ENCODE measurements at regions of chr6 and their contacts with region 1.

Region 1: DNA sequence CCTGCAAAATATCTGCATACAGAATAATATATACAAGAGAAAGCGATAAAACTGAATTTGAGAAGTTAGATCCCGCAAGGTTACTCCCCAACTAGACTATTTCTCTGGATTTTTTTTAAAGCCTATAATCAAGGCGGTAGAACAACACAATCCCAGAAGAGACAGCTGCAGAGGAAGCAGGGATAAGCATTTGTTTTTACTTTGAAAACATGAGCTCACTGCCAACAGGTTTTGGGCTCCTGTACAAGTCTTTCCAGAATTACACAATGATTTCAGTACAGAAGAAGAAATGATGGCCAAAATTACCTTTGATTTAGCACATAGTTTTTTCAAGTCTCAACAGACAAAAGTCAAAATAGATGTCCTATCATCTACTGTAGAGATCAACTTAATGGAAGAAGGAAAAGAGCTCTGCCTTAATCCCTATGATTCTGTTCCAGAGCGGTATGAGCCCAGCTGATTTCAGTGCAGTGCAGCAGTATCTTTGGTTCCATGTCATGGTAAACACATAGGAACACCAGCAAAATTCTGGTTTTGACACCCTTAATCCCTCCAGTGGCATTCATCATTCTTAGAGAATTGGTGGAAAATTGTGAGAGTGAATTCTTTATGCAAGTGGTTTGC is 304.3 kb downstream of the HDGFL1 start:
- DNase-seq: peak; percentile 71
- ATAC-seq: no peak
- H3K4me3 ChIP-seq: no peak overlapping the region
- H3K27ac ChIP-seq: no peak overlapping the region
- H3K4me1 ChIP-seq: peaks cover 4% of the 10 kb centered on the region
- H3K27me3 ChIP-seq: no peaks in the 10 kb centered on the region
- CTCF ChIP-seq: no peak
- POLR2A ChIP-seq: no peak
- RAD21 ChIP-seq: no peak

Region 2: GRCh38 chr6:21648475-21649130 is 1225.0 kb before region 1 on chr6:
- CTCF ChIA-PET with region 1: no interaction called
- POLR2A ChIA-PET with region 1: no interaction called
- dilution Hi-C with region 1: no loop called
- in situ Hi-C with region 1: no loop called
- intact Hi-C with region 1: no loop called
- DNase-seq: no peak
- ATAC-seq: no peak
- H3K4me3 ChIP-seq: no peak overlapping the region
- H3K27ac ChIP-seq: no peak overlapping the region
- H3K4me1 ChIP-seq: no peaks in the 10 kb centered on the region
- H3K27me3 ChIP-seq: no peaks in the 10 kb centered on the region
- CTCF ChIP-seq: no peak
- POLR2A ChIP-seq: no peak
- RAD21 ChIP-seq: no peak

Region 3: DNA sequence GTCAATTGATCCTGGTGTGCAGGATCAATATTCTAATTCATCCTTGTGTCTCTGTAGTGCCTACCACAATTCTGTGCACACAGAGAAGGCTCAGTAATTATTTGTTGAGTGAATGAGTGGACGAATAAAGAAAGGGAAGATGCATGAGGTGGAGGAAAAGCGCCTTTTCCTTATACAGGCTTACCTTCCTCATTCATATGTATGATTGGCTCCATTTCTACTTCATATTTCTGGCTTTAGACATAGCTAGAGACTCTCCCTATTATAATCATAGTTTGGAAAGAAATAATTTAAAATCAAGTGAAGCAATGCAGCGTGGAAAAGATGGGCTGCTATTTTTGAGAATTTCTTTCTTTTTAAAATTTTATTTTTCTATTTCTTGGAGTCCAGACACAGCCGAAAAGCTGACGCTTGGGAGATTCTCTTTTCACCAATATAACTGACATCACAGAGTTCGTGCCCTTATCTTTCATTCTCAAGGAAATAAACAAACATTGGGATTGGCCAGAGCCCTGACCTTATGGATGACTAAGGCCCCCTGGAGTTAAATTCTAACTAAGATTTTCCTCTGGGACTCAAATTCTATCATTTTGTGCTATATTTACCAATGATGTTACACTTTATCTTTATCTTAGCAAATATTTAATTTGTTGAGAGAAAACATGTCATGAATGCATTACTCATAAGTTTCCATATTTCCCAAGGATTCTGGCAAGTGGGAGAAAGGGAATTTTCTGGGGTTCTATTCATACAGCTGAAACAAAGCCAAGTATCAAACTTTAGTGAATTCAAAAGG is 624.9 kb before region 1 on chr6:
- CTCF ChIA-PET with region 1: no interaction called
- POLR2A ChIA-PET with region 1: no interaction called
- dilution Hi-C with region 1: no loop called
- in situ Hi-C with region 1: no loop called
- intact Hi-C with region 1: no loop called
- DNase-seq: peak; percentile 83
- ATAC-seq: peak; percentile 74
- H3K4me3 ChIP-seq: no peak overlapping the region
- H3K27ac ChIP-seq: peak overlapping the region; percentile 43; the same call in 1 of the 2 replicates
- H3K4me1 ChIP-seq: peaks cover 11% of the 10 kb centered on the region
- H3K27me3 ChIP-seq: no peaks in the 10 kb centered on the region
- CTCF ChIP-seq: no peak
- POLR2A ChIP-seq: no peak
- RAD21 ChIP-seq: no peak; the same call in 1 of the 2 replicates

Region 4: GRCh38 chr6:22320750-22321149 is 552.9 kb before region 1 on chr6:
- CTCF ChIA-PET with region 1: no interaction called
- POLR2A ChIA-PET with region 1: no interaction called
- dilution Hi-C with region 1: no loop called
- in situ Hi-C with region 1: no loop called
- intact Hi-C with region 1: loop called (anchors 10 kb)
- DNase-seq: peak; percentile 93
- ATAC-seq: peak; percentile 94
- H3K4me3 ChIP-seq: no peak overlapping the region
- H3K27ac ChIP-seq: no peak overlapping the region
- H3K4me1 ChIP-seq: peaks cover 15% of the 10 kb centered on the region
- H3K27me3 ChIP-seq: no peaks in the 10 kb centered on the region
- CTCF ChIP-seq: no peak
- POLR2A ChIP-seq: no peak
- RAD21 ChIP-seq: no peak

Region 5: GRCh38 chr6:22756365-22756764 is 117.3 kb before region 1 on chr6:
- CTCF ChIA-PET with region 1: no interaction called
- POLR2A ChIA-PET with region 1: no interaction called
- dilution Hi-C with region 1: no loop called
- in situ Hi-C with region 1: no loop called
- intact Hi-C with region 1: loop called (anchors 10 kb)
- DNase-seq: peak; percentile 77
- ATAC-seq: no peak
- H3K4me3 ChIP-seq: no peak overlapping the region
- H3K27ac ChIP-seq: no peak overlapping the region
- H3K4me1 ChIP-seq: peaks cover 5% of the 10 kb centered on the region; the same call in 1 of the 2 replicates
- H3K27me3 ChIP-seq: no peaks in the 10 kb centered on the region
- CTCF ChIP-seq: no peak
- POLR2A ChIP-seq: no peak
- RAD21 ChIP-seq: no peak

Region 6: GRCh38 chr6:22954749-22955385 is 81.2 kb after region 1 on chr6:
- CTCF ChIA-PET with region 1: no interaction called
- POLR2A ChIA-PET with region 1: no interaction called
- dilution Hi-C with region 1: no loop called
- in situ Hi-C with region 1: no loop called
- intact Hi-C with region 1: no loop called
- DNase-seq: peak; percentile 49
- ATAC-seq: peak; percentile 78
- H3K4me3 ChIP-seq: peak overlapping the region; percentile 35
- H3K27ac ChIP-seq: peak overlapping the region; percentile 78; the same call in 1 of the 2 replicates
- H3K4me1 ChIP-seq: peaks cover 8% of the 10 kb centered on the region
- H3K27me3 ChIP-seq: no peaks in the 10 kb centered on the region
- CTCF ChIP-seq: no peak
- POLR2A ChIP-seq: no peak
- RAD21 ChIP-seq: no peak